ENCODE measurements at regions of chr18 and their contacts with region 1.

Region 1: DNA sequence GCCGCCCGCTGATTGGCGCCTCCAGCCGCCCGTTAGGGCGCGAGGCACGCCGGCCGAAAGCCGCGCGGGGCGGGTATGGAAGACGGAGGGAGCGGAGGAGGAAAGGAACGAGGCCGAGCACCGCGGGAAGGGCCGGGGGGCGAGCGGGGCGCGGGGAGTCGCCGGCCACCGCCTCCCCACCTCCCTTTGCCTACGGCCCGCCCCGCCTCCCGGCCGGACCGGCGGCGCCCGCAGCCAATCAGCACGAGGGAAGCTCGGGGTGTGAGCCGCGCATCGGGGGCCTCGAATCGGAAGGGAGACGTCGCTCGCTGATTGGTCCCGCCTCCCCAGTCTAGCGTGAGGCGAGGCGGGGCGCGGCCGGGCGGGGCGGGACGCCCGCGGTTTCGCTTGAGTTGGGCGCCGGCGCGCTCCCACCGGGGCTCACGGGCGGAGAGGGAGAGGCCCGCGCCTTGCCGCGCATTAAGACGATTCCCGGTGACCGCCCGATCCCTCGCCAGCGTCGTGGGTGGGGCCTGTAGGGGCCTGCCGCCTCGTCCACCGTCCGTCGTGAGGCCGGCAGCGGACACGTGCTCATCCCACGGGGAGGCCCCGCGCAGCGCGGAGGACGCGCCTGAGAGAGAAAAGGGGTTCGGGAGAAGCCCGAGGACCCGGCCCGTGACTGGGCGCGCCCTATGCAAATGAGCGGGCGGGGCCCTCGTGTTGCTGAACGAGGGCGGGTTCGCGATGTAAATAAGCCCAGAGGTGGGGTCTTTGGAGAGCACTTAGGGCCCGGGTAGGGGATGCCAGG is 665 bp upstream of the SMAD2 start:
- DNase-seq: peak; percentile 91 to 96 (median 94)
- ATAC-seq: peak; percentile 88
- H3K4me3 ChIP-seq: peak overlapping the region; percentile 64
- H3K4me3 Mint-ChIP-seq: peak overlapping the region; percentile 78 to 92 (median 88)
- H3K27ac ChIP-seq: peak overlapping the region; percentile 91
- H3K27ac Mint-ChIP-seq: peak overlapping the region; percentile 89 to 98 (median 94)
- H3K4me1 ChIP-seq: peaks cover 19 to 36% of the 10 kb centered on the region in 2 donors
- H3K4me1 Mint-ChIP-seq: peaks cover 39 to 46% (median 42%) of the 10 kb centered on the region in 7 donors
- H3K27me3 ChIP-seq: no peaks in the 10 kb centered on the region
- H3K27me3 Mint-ChIP-seq: peaks cover 0 to 13% (median 0%) of the 10 kb centered on the region in 5 donors

Region 2: GRCh38 chr18:46173393-46174341 is 1757.5 kb before region 1 on chr18:
- CTCF ChIA-PET with region 1: no interaction called
- POLR2A ChIA-PET with region 1: no interaction called
- intact Hi-C with region 1: loop called in 1 of 2 experiments (anchors 5 kb)
- DNase-seq: peak; percentile 85 to 93 (median 90)
- ATAC-seq: peak; percentile 96
- H3K4me3 ChIP-seq: peak overlapping the region; percentile 98
- H3K4me3 Mint-ChIP-seq: peak overlapping the region; percentile 93 to 99 (median 98)
- H3K27ac ChIP-seq: peak overlapping the region; percentile 84
- H3K27ac Mint-ChIP-seq: peak overlapping the region; percentile 93 to 99 (median 96)
- H3K4me1 ChIP-seq: peaks cover 13 to 14% of the 10 kb centered on the region in 2 donors
- H3K4me1 Mint-ChIP-seq: peaks cover 34 to 48% (median 42%) of the 10 kb centered on the region in 7 donors
- H3K27me3 ChIP-seq: no peaks in the 10 kb centered on the region
- H3K27me3 Mint-ChIP-seq: peaks cover 0 to 3% (median 0%) of the 10 kb centered on the region in 5 donors

Region 3: GRCh38 chr18:47772374-47773248 is 158.5 kb before region 1 on chr18:
- CTCF ChIA-PET with region 1: no interaction called
- POLR2A ChIA-PET with region 1: no interaction called
- intact Hi-C with region 1: loop called (anchors 1 to 2 kb)
- DNase-seq: peak in 7 of 9 donors; percentile 41 to 77 (median 50)
- ATAC-seq: peak; percentile 69
- H3K4me3 ChIP-seq: no peak overlapping the region
- H3K4me3 Mint-ChIP-seq: peak overlapping the region in 1 of 10 donors; percentile 4
- H3K27ac ChIP-seq: no peak overlapping the region
- H3K27ac Mint-ChIP-seq: no peak overlapping the region
- H3K4me1 ChIP-seq: no peaks in the 10 kb centered on the region
- H3K4me1 Mint-ChIP-seq: peaks cover 0 to 3% (median 0%) of the 10 kb centered on the region in 7 donors
- H3K27me3 ChIP-seq: no peaks in the 10 kb centered on the region
- H3K27me3 Mint-ChIP-seq: peaks cover 0 to 6% (median 4%) of the 10 kb centered on the region in 5 donors

Region 4: GRCh38 chr18:47917923-47918610 is 13.1 kb before region 1 on chr18:
- CTCF ChIA-PET with region 1: interaction called, 3 read pairs
- POLR2A ChIA-PET with region 1: interaction called, 5 read pairs
- intact Hi-C with region 1: loop called (anchors 1 kb)
- DNase-seq: no peak
- ATAC-seq: peak; percentile 51
- H3K4me3 ChIP-seq: no peak overlapping the region
- H3K4me3 Mint-ChIP-seq: peak overlapping the region in 9 of 10 donors; percentile 3 to 72 (median 37)
- H3K27ac ChIP-seq: peak overlapping the region; percentile 47
- H3K27ac Mint-ChIP-seq: peak overlapping the region; percentile 67 to 91 (median 82)
- H3K4me1 ChIP-seq: peaks cover 10 to 29% of the 10 kb centered on the region in 2 donors
- H3K4me1 Mint-ChIP-seq: peaks cover 43 to 99% (median 92%) of the 10 kb centered on the region in 7 donors
- H3K27me3 ChIP-seq: no peaks in the 10 kb centered on the region
- H3K27me3 Mint-ChIP-seq: no peaks in the 10 kb centered on the region

Region 5: DNA sequence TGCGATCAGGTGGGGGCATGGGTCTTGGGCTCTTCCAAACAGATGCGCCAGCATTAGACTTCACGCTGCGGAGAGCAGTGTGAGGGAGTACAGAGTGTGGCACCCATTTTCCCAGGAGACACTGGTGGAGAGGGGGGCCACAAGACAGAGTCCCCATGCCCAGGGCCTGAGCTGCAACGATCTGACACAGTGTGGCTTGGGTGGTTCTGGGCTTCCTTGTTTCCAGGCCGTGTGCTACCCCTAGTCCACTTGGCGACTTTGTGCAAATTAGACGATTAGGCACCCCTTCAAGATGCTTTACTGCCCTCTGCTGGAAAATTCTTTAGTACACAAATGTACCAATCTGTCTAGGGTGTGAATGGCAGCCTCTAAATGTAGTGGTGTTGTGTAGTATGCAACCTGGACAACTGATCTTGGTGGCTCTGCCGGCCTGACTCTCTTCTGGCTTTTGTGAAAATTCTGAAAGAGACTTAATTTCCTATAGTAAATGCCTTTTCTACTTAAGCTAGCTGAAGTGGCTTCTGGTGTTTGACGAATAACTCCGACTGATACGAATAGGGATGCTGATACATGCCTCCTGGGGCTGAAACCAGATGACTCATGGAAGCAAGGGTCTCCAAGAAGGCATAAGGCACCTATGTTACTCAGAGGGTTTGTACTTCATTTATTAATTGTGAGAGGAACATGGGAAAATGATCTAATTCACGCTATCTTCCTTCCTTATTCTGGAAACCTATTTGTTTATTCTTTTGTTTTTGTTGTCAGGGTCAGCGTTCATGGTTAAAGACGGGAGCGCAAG is 91.6 kb after region 1 on chr18:
- CTCF ChIA-PET with region 1: no interaction called
- POLR2A ChIA-PET with region 1: no interaction called
- intact Hi-C with region 1: loop called (anchors 1 to 2 kb)
- DNase-seq: peak in 7 of 9 donors; percentile 10 to 56 (median 39)
- ATAC-seq: peak; percentile 74
- H3K4me3 ChIP-seq: no peak overlapping the region
- H3K4me3 Mint-ChIP-seq: no peak overlapping the region
- H3K27ac ChIP-seq: no peak overlapping the region
- H3K27ac Mint-ChIP-seq: no peak overlapping the region
- H3K4me1 ChIP-seq: no peaks in the 10 kb centered on the region
- H3K4me1 Mint-ChIP-seq: peaks cover 0 to 8% (median 0%) of the 10 kb centered on the region in 7 donors
- H3K27me3 ChIP-seq: no peaks in the 10 kb centered on the region
- H3K27me3 Mint-ChIP-seq: peaks cover 24 to 55% (median 31%) of the 10 kb centered on the region in 5 donors

Region 6: GRCh38 chr18:48186061-48186798 is 255.1 kb after region 1 on chr18:
- CTCF ChIA-PET with region 1: no interaction called
- POLR2A ChIA-PET with region 1: no interaction called
- intact Hi-C with region 1: no loop called
- DNase-seq: no peak
- ATAC-seq: no peak
- H3K4me3 ChIP-seq: no peak overlapping the region
- H3K4me3 Mint-ChIP-seq: no peak overlapping the region
- H3K27ac ChIP-seq: no peak overlapping the region
- H3K27ac Mint-ChIP-seq: no peak overlapping the region
- H3K4me1 ChIP-seq: no peaks in the 10 kb centered on the region
- H3K4me1 Mint-ChIP-seq: peaks cover 0 to 1% (median 0%) of the 10 kb centered on the region in 7 donors
- H3K27me3 ChIP-seq: no peaks in the 10 kb centered on the region
- H3K27me3 Mint-ChIP-seq: peaks cover 19 to 43% (median 34%) of the 10 kb centered on the region in 5 donors

Region 7: GRCh38 chr18:48538531-48539405 is 607.6 kb after region 1 on chr18 and contains the start of gene CTIF:
- CTCF ChIA-PET with region 1: no interaction called
- POLR2A ChIA-PET with region 1: no interaction called
- intact Hi-C with region 1: loop called in 1 of 2 experiments (anchors 2 kb)
- DNase-seq: peak; percentile 17 to 71 (median 37)
- ATAC-seq: peak; percentile 78
- H3K4me3 ChIP-seq: peak within 1 kb of the TSS; percentile 75
- H3K4me3 Mint-ChIP-seq: peak within 1 kb of the TSS; percentile 73 to 95 (median 88)
- H3K27ac ChIP-seq: peak within 1 kb of the TSS; percentile 19
- H3K27ac Mint-ChIP-seq: peak within 1 kb of the TSS in 1 of 9 donors; percentile 46
- H3K4me1 ChIP-seq: peaks cover 0 to 5% of the 10 kb centered on the region in 2 donors
- H3K4me1 Mint-ChIP-seq: peaks cover 0 to 17% (median 0%) of the 10 kb centered on the region in 7 donors
- H3K27me3 ChIP-seq: no peaks in the 10 kb centered on the region
- H3K27me3 Mint-ChIP-seq: peaks cover 1 to 31% (median 6%) of the 10 kb centered on the region in 5 donors
- total RNA-seq, gene CTIF: 1.3 to 11.2 (median 2.5) TPM

Region 8: DNA sequence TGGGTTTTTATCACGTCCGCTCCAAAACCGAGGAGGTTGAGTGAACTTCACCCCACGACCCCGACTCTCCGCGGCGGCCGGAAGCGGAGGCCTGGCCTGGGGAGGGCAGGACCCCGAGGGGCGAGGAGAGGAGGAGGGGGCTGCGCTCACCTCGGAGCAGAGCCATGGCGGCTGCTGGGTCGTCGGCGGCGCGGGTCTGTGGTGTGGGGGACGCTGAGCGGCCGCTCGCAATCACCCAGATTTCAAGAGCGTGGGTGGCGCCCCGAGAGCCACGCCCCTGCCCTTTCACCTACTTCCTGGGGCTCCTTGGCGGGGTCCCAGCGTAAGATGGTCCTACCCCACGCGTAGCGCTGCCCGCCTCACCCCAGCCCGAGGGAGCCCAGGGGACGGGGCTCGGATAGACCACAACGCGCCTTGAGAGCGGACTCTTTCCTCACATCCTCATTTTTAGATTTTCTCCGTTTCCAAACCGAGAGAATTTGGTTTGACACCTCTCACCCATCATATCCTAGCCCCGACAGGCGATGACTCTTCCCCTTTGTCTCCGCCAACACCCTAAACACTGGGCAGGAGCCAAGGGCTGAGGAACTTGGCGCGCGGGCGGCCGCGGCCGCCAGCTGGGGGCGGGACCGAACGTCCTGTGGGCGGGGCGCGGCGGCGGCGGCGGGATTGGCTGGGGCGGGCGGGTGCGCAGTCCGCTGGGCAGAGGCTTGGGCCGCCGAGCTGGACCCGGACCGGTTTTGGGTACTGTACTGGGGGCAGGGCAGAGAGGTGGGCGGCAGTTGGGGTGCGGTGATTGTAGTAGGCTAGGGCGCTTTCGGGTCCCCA is 1882.4 kb after region 1 on chr18 and contains the start of gene ACAA2:
- CTCF ChIA-PET with region 1: no interaction called
- POLR2A ChIA-PET with region 1: no interaction called
- intact Hi-C with region 1: loop called in 1 of 2 experiments (anchors 2 kb)
- DNase-seq: peak; percentile 48 to 87 (median 60)
- ATAC-seq: peak; percentile 93
- H3K4me3 ChIP-seq: peak within 1 kb of the TSS; percentile 87
- H3K4me3 Mint-ChIP-seq: peak within 1 kb of the TSS; percentile 89 to 99 (median 96)
- H3K27ac ChIP-seq: peak within 1 kb of the TSS; percentile 90
- H3K27ac Mint-ChIP-seq: peak within 1 kb of the TSS; percentile 91 to 99 (median 97)
- H3K4me1 ChIP-seq: peaks cover 20 to 39% of the 10 kb centered on the region in 2 donors
- H3K4me1 Mint-ChIP-seq: peaks cover 42 to 70% (median 63%) of the 10 kb centered on the region in 7 donors
- H3K27me3 ChIP-seq: no peaks in the 10 kb centered on the region
- H3K27me3 Mint-ChIP-seq: no peaks in the 10 kb centered on the region
- total RNA-seq, gene ACAA2: 15.4 to 94.7 (median 24.4) TPM

Measured in naive thymus-derived CD4-positive, alpha-beta T cell (primary cell).